B cell (primary cell): ENCODE measurements at regions of chr18 and their contacts with region 1.

Region 1: GRCh38 chr18:3983351-3983969 is 471.6 kb downstream of the DLGAP1 start:
- DNase-seq: no peak
- ATAC-seq: no peak
- H3K4me3 ChIP-seq: no peak overlapping the region
- H3K4me3 Mint-ChIP-seq: no peak overlapping the region
- H3K27ac ChIP-seq: no peak overlapping the region
- H3K27ac Mint-ChIP-seq: no peak overlapping the region
- H3K4me1 ChIP-seq: no peaks in the 10 kb centered on the region
- H3K4me1 Mint-ChIP-seq: peaks cover 4% of the 10 kb centered on the region
- H3K27me3 ChIP-seq: no peaks in the 10 kb centered on the region
- H3K27me3 Mint-ChIP-seq: peaks cover 5% of the 10 kb centered on the region
- CTCF ChIP-seq: no peak

Region 2: GRCh38 chr18:3044894-3045698 is 938.4 kb before region 1 on chr18:
- CTCF ChIA-PET with region 1: no interaction called
- POLR2A ChIA-PET with region 1: no interaction called
- intact Hi-C with region 1: no loop called
- DNase-seq: no peak
- ATAC-seq: no peak
- H3K4me3 ChIP-seq: no peak overlapping the region
- H3K4me3 Mint-ChIP-seq: no peak overlapping the region
- H3K27ac ChIP-seq: no peak overlapping the region
- H3K27ac Mint-ChIP-seq: no peak overlapping the region
- H3K4me1 ChIP-seq: no peaks in the 10 kb centered on the region
- H3K4me1 Mint-ChIP-seq: peaks cover 4% of the 10 kb centered on the region
- H3K27me3 ChIP-seq: no peaks in the 10 kb centered on the region
- H3K27me3 Mint-ChIP-seq: peaks cover 12% of the 10 kb centered on the region
- CTCF ChIP-seq: no peak

Region 3: GRCh38 chr18:3995476-3996102 is 12.1 kb after region 1 on chr18:
- CTCF ChIA-PET with region 1: interaction called, 14 read pairs
- POLR2A ChIA-PET with region 1: no interaction called
- intact Hi-C with region 1: no loop called
- DNase-seq: peak; percentile 55
- ATAC-seq: peak; percentile 53
- H3K4me3 ChIP-seq: no peak overlapping the region
- H3K4me3 Mint-ChIP-seq: no peak overlapping the region
- H3K27ac ChIP-seq: no peak overlapping the region
- H3K27ac Mint-ChIP-seq: no peak overlapping the region
- H3K4me1 ChIP-seq: no peaks in the 10 kb centered on the region
- H3K4me1 Mint-ChIP-seq: no peaks in the 10 kb centered on the region
- H3K27me3 ChIP-seq: no peaks in the 10 kb centered on the region
- H3K27me3 Mint-ChIP-seq: no peaks in the 10 kb centered on the region
- CTCF ChIP-seq: peak; percentile 84